Ascending aorta (tissue), 2 donors: ENCODE measurements at regions of chr4 and their contacts with region 1.

Region 1: DNA sequence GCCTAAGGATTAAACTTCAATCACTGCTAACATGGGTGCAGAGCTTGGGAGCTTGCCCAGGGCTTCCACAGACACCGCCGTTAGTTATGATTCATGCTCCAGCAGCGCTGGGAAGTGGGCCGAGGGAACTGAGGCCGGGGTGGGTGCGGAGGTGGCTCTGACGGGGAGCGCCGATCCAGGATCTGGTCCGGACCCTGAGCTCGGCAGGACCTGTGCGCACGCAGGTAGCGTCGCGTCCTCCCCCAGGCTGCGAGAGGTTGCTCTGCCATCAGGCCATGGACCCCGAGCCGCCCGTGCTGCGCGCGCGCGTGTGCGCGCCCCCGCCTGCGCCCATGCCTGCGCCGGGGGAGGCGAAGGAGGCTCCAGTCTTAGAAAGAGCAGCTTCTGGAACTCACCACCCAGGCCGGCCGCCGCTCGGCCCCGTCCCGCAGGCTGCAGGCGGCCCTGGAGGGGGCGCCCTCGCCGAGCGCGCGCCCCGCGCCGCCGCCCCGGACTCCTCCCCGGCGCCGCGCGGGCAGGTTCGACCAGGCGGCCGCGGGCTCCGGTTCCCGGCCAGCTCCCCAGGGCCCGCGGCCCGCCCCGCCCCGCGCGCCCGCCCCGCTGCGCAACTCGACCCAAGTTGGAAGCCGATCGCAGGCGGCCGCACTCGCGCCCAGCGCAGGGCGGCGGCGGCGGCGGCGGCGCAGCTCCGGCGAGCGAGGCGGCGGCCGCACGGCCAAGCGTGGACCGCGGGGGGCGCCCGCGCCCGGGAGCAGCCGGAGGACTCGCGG is 729 bp upstream of the ADRA2C start:
- DNase-seq: peak in 1 of 2 donors; percentile 89
- H3K4me3 ChIP-seq: peak overlapping the region; percentile 49 to 78
- H3K27ac ChIP-seq: peak overlapping the region; percentile 89 to 90
- H3K4me1 ChIP-seq: peaks cover 0 to 29% of the 10 kb centered on the region in 2 donors
- H3K27me3 ChIP-seq: no peaks in the 10 kb centered on the region
- CTCF ChIP-seq: peak in 2 of 3 experiments; percentile 28 to 30

Region 2: DNA sequence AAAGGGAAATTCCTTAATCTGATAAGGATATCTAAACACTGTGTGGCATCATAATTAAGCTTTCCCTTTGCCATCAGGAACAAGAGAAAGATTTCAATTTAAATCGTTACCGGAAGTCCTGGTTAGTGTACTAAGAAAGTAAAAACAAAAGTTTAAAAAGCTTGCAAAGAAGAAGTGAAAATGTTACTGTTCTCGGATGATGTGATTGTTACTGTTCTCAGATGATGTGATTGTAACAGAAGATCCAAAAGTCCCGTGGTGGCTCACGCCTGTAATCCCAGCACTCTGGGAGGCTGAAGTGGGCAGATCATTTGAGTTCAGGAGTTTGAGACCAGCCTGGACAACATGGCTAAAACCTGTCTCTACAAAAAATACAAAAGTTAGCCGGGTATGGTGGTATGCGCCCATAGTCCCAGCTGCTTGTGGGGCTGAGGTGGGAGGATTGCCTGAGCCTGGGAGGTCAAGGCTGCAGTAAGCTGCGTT is 410.1 kb before region 1 on chr4:
- intact Hi-C with region 1: no loop called
- DNase-seq: no peak
- H3K4me3 ChIP-seq: no peak overlapping the region
- H3K27ac ChIP-seq: no peak overlapping the region
- H3K4me1 ChIP-seq: no peaks in the 10 kb centered on the region
- H3K27me3 ChIP-seq: no peaks in the 10 kb centered on the region
- CTCF ChIP-seq: no peak

Region 3: DNA sequence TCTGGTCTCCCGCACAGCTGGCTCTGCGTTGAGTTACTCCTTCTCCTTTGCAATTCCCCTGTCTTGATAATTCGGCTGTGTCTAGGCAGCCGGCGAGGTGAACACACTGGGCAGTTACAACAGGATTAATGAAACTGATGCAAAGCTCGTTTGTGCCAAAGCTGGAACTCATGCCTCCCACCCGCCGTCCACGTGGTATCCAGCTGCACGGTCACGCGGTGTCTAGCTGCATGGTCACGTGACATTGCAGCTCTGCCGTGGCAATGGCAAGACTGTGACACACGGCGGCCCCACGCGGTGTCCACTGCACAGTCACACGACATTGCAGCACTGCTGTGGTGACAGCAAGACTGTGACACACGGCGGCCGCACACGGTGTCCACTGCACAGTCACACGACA is 202.1 kb before region 1 on chr4:
- intact Hi-C with region 1: loop called (anchors 10 kb)
- DNase-seq: no peak
- H3K4me3 ChIP-seq: no peak overlapping the region
- H3K27ac ChIP-seq: no peak overlapping the region
- H3K4me1 ChIP-seq: no peaks in the 10 kb centered on the region
- H3K27me3 ChIP-seq: no peaks in the 10 kb centered on the region
- CTCF ChIP-seq: no peak

Region 4: GRCh38 chr4:3708103-3708510 is 57.3 kb before region 1 on chr4:
- intact Hi-C with region 1: loop called (anchors 2 kb)
- DNase-seq: peak; percentile 61 to 94
- H3K4me3 ChIP-seq: peak overlapping the region; percentile 32 to 38
- H3K27ac ChIP-seq: peak overlapping the region; percentile 68 to 73
- H3K4me1 ChIP-seq: peaks cover 7 to 41% of the 10 kb centered on the region in 2 donors
- H3K27me3 ChIP-seq: no peaks in the 10 kb centered on the region
- CTCF ChIP-seq: no peak

Region 5: GRCh38 chr4:3747581-3747904 is 17.9 kb before region 1 on chr4:
- intact Hi-C with region 1: loop called (anchors 1 kb)
- DNase-seq: no peak
- H3K4me3 ChIP-seq: no peak overlapping the region
- H3K27ac ChIP-seq: peak overlapping the region; percentile 36 to 51
- H3K4me1 ChIP-seq: peaks cover 7 to 31% of the 10 kb centered on the region in 2 donors
- H3K27me3 ChIP-seq: no peaks in the 10 kb centered on the region
- CTCF ChIP-seq: peak in 2 of 3 experiments; percentile 37 to 50

Region 6: GRCh38 chr4:4599481-4600275 is 834.2 kb after region 1 on chr4:
- intact Hi-C with region 1: no loop called
- DNase-seq: no peak
- H3K4me3 ChIP-seq: no peak overlapping the region
- H3K27ac ChIP-seq: no peak overlapping the region
- H3K4me1 ChIP-seq: no peaks in the 10 kb centered on the region
- H3K27me3 ChIP-seq: no peaks in the 10 kb centered on the region
- CTCF ChIP-seq: no peak